ENCODE measurements at regions of chr10 and their contacts with region 1.

Region 1: DNA sequence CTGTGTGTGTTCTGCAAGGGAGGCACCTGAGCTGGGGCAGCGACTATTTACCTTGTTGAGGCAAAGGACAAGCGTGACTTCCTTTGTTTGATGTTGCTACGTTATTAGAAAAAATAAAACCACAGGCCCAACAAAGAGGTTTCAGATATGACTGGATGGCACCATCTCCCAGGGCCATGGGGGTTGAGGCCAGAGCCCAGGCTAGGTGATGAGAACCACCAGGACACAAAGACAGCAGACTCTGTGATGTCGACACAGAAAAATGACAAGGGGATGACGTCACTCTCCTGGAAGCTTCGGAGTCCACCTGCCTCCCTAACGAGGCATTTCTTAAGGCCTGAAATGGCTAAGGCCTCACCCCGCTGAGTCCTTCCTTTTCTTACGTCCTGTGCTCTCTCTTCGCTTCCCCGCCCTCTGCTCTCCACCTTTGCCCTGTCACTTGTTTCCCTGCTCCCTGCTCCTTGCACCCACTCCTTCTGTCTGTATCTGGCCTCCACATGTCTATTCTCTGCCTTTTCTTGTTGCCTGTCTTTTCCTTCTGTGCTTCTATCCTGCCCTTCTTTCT is 83.0 kb upstream of the ADRB1 start:
- DNase-seq: peak; percentile 46
- ATAC-seq: peak; percentile 13
- H3K4me3 Mint-ChIP-seq: peak overlapping the region; percentile 12
- H3K27ac Mint-ChIP-seq: no peak overlapping the region
- H3K4me1 Mint-ChIP-seq: peaks cover 48% of the 10 kb centered on the region
- H3K27me3 Mint-ChIP-seq: peaks cover 2% of the 10 kb centered on the region

Region 2: GRCh38 chr10:113854011-113854760 is 106.5 kb before region 1 on chr10 and contains the starts of genes DCLRE1A and NHLRC2:
- CTCF ChIA-PET with region 1: no interaction called
- POLR2A ChIA-PET with region 1: interaction called, 3 read pairs
- intact Hi-C with region 1: loop called (anchors 2 kb)
- DNase-seq: peak; percentile 77
- ATAC-seq: peak; percentile 51
- H3K4me3 Mint-ChIP-seq: peak within 1 kb of the TSS; percentile 80
- H3K27ac Mint-ChIP-seq: peak within 1 kb of the TSS; percentile 97
- H3K4me1 Mint-ChIP-seq: peaks cover 39% of the 10 kb centered on the region
- H3K27me3 Mint-ChIP-seq: no peaks in the 10 kb centered on the region
- total RNA-seq, gene DCLRE1A: 12.5 to 14.4 TPM
- total RNA-seq, gene NHLRC2: 20.1 to 22.3 TPM

Region 3: DNA sequence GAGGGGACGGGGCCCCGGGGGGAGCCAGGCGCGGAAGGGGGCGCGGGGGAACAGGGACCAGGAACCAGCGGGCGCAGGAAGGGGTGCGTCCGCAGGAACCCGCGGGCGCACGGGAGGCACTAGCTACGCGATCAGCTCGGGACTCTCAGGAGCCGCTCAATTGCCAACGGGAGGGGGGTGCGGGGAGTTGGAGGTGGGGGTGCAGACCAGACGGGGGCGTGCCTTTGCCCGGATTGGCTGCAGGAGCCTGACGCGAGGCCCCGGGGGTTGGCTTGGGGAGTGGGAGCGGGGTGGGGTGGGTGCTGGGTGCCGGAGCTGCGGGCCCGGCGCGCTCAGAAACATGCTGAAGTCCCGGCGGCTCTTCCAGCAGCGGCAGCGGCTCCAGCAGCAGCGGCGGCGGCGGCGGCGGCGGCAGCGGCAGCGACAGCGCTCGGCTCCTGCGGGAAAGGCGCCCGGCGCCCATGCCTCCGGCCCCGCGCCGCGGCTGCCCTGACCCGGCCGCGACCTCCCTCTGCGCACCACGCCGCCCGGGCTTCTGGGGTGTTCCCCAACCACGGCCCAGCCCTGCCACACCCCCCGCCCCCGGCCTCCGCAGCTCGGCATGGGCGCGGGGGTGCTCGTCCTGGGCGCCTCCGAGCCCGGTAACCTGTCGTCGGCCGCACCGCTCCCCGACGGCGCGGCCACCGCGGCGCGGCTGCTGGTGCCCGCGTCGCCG is 83.0 kb after region 1 on chr10 and contains the start of gene ADRB1:
- CTCF ChIA-PET with region 1: no interaction called
- POLR2A ChIA-PET with region 1: interaction called, 4 read pairs
- intact Hi-C with region 1: loop called in 1 of 2 experiments (anchors 5 kb)
- DNase-seq: peak; percentile 60
- ATAC-seq: peak; percentile 54
- H3K4me3 Mint-ChIP-seq: peak within 1 kb of the TSS; percentile 61
- H3K27ac Mint-ChIP-seq: no peak within 1 kb of the TSS
- H3K4me1 Mint-ChIP-seq: peaks cover 16% of the 10 kb centered on the region
- H3K27me3 Mint-ChIP-seq: peaks cover 54% of the 10 kb centered on the region
- total RNA-seq, gene ADRB1: not detected

Region 4: DNA sequence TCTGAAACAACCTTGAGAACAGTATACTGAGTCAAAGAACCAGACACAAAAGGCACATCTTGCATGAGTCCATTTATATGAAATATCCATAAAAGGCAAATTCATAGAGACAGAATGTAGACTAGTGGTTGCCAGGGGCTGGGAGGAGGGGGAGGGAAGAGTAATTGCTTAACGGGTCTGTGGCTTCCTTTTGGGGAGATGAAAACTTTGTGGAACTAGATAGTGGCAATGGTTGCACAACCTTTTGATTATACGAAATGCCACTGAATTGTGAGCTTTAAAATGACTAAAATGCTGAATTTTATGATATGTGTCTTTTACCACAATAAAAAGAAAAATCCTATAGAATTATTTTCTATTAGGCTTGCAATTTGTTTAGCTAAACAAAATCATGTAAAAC is 99.8 kb after region 1 on chr10:
- CTCF ChIA-PET with region 1: no interaction called
- POLR2A ChIA-PET with region 1: no interaction called
- intact Hi-C with region 1: no loop called
- DNase-seq: no peak
- ATAC-seq: no peak
- H3K4me3 Mint-ChIP-seq: no peak overlapping the region
- H3K27ac Mint-ChIP-seq: no peak overlapping the region
- H3K4me1 Mint-ChIP-seq: peaks cover 4% of the 10 kb centered on the region
- H3K27me3 Mint-ChIP-seq: peaks cover 8% of the 10 kb centered on the region

Region 5: DNA sequence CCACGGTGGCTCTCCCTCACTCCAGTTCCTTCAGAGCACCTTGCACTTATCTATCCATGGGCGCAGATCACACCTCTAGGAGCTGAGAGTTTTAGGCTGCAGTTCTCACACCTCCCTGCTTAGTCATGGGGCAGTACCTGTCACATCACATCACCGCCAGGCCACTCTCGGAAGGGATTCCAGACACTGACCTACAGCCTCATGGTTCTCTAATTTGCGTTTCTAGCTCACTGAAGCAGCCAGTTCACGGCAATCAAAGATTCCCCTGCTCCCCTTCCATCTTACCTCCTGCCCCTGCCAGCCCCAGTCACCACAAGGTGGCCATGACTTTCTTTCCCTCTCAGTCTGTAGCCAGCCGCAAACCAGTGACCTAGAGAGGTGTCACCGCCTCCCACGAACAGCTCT is 117.1 kb after region 1 on chr10:
- CTCF ChIA-PET with region 1: no interaction called
- POLR2A ChIA-PET with region 1: no interaction called
- intact Hi-C with region 1: no loop called
- DNase-seq: no peak
- ATAC-seq: no peak
- H3K4me3 Mint-ChIP-seq: no peak overlapping the region
- H3K27ac Mint-ChIP-seq: no peak overlapping the region
- H3K4me1 Mint-ChIP-seq: peaks cover 6% of the 10 kb centered on the region
- H3K27me3 Mint-ChIP-seq: peaks cover 3% of the 10 kb centered on the region

Region 6: DNA sequence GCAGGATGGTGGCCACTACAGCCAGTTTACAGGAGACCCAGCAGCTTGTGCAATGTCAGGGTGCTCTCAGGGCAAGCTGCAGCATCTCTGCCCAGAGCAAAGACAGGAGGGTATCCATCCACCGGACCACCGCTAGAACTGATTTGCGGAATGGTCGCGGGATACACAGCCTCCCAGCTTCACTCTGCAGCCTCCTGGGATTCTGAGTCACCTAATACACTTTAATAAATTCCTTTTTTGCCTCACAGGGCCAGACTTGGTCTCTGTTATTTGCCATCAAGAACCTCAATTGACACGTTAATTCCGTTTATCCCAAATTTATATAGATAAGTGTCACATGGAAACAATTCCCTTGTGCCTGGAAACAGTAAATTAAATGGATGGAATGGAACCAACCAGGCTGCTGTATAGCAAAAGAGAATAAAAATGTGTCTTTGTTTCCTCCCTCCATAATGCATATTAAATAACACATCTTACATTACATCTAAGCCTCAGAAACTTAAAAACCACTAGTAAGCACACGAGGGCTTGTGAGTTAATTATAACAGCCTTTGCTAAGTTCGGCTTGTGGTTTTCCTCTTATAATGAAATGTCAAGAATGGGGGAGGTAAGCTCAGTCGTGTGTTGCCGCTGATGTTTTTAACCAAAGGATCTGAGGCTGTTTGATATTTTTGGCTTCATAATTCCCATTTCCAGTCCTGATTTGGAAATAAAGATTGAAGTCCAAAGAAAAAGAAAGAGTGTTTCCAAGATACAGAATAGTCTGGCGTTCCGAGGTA is 135.0 kb after region 1 on chr10:
- CTCF ChIA-PET with region 1: no interaction called
- POLR2A ChIA-PET with region 1: no interaction called
- intact Hi-C with region 1: loop called in 1 of 2 experiments (anchors 10 kb)
- DNase-seq: no peak
- ATAC-seq: no peak
- H3K4me3 Mint-ChIP-seq: no peak overlapping the region
- H3K27ac Mint-ChIP-seq: no peak overlapping the region
- H3K4me1 Mint-ChIP-seq: peaks cover 30% of the 10 kb centered on the region
- H3K27me3 Mint-ChIP-seq: peaks cover 14% of the 10 kb centered on the region